Posterior cingulate gyrus (tissue), 11 donors: ENCODE measurements at regions of chr16 and their contacts with region 1.

Region 1: GRCh38 chr16:67159593-67160406 is at the starts of genes FBXL8 and TRADD:
- DNase-seq: peak in 5 of 10 donors; percentile 51 to 94 (median 73)

Region 2: DNA sequence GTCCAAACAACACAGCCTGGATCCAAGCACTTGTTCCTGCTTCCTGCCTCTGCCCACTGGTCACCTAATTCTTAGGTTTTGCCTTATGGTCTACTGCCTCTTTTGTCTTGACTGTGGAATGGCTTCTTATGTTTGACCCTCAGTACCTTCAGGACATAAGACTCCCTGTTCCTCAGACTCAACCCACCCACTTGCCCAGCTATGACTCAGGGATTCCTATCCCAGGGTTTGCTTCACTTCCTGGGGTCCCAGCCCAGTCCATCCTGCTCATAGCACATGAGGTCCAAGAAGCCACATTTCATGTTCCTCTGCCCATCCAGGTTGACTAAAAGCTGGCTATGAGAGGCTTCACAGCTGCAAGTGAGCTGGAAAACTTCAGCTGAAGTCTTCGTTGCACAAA is 1114.2 kb before region 1 on chr16:
- intact Hi-C with region 1: no loop called
- DNase-seq: no peak

Region 3: GRCh38 chr16:66954097-66954659 is 205.6 kb before region 1 on chr16:
- intact Hi-C with region 1: loop called (anchors 2 kb)
- DNase-seq: peak; percentile 60 to 96 (median 82)

Region 4: GRCh38 chr16:66977341-66978113 is 182.3 kb before region 1 on chr16:
- intact Hi-C with region 1: loop called (anchors 1 kb)
- DNase-seq: peak; percentile 80 to 99 (median 94)

Region 5: DNA sequence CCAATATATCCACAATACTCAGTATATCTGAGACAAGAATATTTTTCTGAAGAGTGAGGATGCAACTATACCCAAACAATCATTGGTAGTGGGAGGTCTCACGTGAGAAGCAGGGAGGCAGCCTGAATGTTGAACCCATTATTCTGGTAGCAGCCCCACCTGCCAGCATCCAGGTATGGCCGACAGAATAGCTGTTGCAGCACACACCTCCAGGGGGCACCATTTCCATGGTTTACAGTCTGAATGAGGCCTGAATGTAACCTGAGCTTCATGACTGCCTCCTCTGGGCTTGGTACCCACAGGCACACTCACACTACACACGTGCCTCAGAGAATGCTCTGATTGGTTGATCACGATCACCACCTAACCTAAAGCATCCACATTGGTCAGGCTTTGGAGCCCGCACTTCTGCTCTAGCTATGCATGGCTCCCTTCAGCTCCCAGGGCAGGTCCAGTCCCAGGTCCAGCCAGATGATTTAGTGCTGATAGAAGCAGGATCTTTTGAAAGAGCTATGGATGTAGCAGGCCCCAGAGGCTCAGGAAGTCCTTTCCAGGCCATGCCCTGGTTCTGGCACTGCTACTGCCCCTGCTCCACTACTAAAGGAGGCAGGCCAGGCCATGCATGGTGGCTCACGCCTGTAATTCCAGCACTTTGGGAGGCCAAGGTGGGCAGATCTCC is 141.9 kb before region 1 on chr16:
- intact Hi-C with region 1: loop called (anchors 5 kb)
- DNase-seq: peak in 9 of 10 donors; percentile 39 to 93 (median 64)

Region 6: GRCh38 chr16:67109407-67110135 is 50.2 kb before region 1 on chr16 and contains the start of gene PHAF1:
- intact Hi-C with region 1: loop called (anchors 5 kb)
- DNase-seq: peak; percentile 92 to 99 (median 96)